ENCODE measurements at regions of chr6 and their contacts with region 1.

Region 1: DNA sequence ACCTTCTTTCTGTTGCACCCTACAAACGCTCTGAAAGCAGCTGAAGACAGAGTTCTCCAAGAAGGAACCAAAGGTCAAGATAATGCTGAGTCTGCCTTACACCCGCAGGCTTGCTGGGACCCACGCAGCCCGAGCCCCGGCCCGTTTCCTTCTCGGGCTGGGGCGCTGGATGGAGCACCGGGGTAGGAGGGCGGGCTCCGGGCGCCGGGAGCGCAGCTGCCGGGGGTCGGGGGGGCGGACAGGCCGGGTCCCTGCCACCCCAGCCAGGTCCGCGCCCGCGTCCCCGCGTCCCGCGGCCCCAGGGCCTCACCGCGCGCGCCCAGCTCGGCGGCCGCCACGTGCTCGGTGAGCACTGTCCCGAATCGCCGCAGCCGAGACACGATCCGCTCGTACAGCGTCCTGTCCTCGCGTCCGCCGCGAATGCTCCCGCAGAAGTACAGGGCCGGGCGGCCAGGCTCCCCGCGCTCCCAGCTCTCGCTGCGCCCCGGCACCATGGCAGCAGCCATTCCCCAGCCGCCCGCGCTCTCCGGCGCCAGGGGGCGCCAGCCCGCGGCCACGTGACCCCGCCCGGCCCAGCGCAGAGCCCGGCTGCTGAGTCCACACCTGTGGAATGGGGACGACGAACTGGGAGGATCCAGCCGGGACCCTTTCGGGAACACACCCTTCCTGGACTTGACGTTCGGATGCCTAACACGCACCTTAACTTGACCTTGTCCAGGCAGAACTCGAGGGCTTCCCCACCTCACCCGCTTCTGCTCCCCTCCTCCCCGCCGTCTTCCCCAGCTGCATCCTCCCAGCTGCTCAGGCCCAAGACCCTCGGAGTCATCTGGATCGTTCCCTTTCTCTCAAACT is at the start of gene DNPH1:
- DNase-seq: peak; percentile 60 to 91 (median 78)
- ATAC-seq: peak; percentile 67
- H3K4me3 ChIP-seq: peak within 1 kb of the TSS; percentile 68
- H3K4me3 Mint-ChIP-seq: peak within 1 kb of the TSS; percentile 93
- H3K27ac ChIP-seq: peak within 1 kb of the TSS in 1 of 2 donors; percentile 56
- H3K27ac Mint-ChIP-seq: peak within 1 kb of the TSS; percentile 88
- H3K4me1 ChIP-seq: peaks cover 47% of the 10 kb centered on the region
- H3K4me1 Mint-ChIP-seq: peaks cover 44% of the 10 kb centered on the region
- H3K27me3 ChIP-seq: no peaks in the 10 kb centered on the region
- H3K27me3 Mint-ChIP-seq: peaks cover 6% of the 10 kb centered on the region
- CTCF ChIP-seq: peak; percentile 90
- total RNA-seq, gene DNPH1: 27.3 to 30.6 TPM

Region 2: DNA sequence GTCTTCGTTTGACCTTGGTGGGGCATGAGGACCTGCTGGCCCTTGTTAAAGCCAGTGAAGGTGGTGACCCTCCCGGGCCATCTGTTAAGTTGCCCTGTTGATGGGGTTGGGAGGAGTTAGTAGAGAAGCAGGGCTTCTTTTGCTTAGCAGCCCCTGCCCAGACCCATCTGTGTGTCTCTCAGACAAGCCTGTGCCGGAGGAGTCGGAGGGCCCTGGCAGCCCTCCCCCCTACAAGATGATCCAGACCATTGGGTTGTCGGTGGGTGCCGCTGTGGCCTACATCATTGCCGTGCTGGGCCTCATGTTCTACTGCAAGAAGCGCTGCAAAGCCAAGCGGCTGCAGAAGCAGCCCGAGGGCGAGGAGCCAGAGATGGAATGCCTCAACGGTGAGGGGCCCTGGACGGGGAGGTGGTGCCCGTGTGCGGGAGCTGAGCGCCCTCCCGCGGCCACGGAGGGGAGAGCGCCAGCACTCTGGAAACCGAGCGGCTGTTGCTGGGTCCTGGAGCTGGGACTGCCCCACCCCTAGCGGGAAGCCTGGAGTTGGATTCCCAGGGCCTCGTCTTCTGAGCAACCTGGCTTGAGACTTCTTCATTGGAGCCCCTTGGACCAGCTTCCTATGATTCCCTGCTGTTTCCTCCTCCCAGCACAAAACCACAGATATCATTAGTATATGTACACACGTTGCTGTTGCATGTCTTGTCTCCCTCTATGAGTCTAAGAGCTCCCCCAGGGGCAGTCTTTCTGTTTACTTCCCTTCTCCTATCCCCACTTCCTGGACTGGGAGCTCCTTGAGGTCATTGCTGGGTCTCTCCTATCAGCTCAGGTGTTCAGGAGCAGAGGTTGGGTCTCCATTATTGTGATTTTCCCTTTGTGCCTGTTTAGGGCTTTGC is 85.7 kb before region 1 on chr6:
- CTCF ChIA-PET with region 1: no interaction called
- POLR2A ChIA-PET with region 1: no interaction called
- intact Hi-C with region 1: no loop called
- DNase-seq: peak; percentile 50 to 88 (median 70)
- ATAC-seq: peak; percentile 99
- H3K4me3 ChIP-seq: no peak overlapping the region
- H3K4me3 Mint-ChIP-seq: no peak overlapping the region
- H3K27ac ChIP-seq: no peak overlapping the region
- H3K27ac Mint-ChIP-seq: no peak overlapping the region
- H3K4me1 ChIP-seq: peaks cover 19% of the 10 kb centered on the region
- H3K4me1 Mint-ChIP-seq: peaks cover 10% of the 10 kb centered on the region
- H3K27me3 ChIP-seq: peaks cover 0 to 2% of the 10 kb centered on the region in 2 experiments
- H3K27me3 Mint-ChIP-seq: no peaks in the 10 kb centered on the region
- CTCF ChIP-seq: peak; percentile 88

Region 3: DNA sequence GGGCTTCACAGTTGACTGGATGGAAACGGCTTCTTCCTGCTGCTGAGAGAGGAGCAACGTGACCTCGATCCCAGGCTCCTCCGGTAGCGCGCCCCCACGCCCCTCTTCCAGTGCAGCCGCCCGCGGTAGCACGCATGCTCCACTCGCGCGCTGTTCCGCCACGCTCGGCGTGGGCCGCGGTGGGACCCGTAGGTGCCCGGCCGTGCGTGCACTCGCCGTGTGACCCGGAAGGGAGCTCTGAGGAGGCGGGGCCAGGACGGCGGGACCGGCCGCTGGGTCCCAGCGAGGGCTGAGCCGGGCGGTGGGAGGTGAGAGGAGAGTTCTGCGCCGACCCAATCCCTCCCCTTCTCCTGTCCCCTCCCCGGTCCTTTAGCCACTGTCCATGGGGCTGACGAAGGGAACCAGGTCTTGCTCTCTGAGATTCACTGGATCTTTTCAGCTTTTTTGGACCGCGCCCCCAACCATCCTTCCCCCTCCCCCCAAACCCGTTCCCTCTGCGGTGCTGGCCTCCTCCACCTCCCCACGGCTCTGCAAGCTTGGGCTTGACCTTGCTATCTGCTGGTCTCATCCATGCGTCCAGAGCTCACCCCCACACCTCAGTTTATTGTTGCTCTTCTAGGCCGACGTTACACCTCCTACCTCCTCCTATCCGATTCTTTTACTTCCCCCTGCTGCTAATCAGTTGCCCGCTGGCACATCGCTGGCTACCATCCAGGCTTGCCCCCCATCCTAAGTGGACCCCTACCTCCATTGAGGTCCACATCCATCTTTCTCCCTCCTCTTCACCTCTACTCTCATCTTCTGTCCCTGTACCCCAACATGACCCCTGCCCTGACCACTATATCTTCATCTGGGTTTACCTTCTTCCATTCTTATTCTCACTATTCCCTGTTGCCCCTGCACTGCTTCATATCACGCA is 47.0 kb before region 1 on chr6 and contains the start of gene CUL9:
- CTCF ChIA-PET with region 1: interaction called, 11 read pairs
- POLR2A ChIA-PET with region 1: interaction called, 7 read pairs
- intact Hi-C with region 1: loop called (anchors 1 to 5 kb)
- DNase-seq: peak; percentile 45 to 90 (median 74)
- ATAC-seq: peak; percentile 87
- H3K4me3 ChIP-seq: peak within 1 kb of the TSS; percentile 86
- H3K4me3 Mint-ChIP-seq: peak within 1 kb of the TSS; percentile 92
- H3K27ac ChIP-seq: peak within 1 kb of the TSS; percentile 64 to 68
- H3K27ac Mint-ChIP-seq: peak within 1 kb of the TSS; percentile 75
- H3K4me1 ChIP-seq: peaks cover 53% of the 10 kb centered on the region
- H3K4me1 Mint-ChIP-seq: peaks cover 56% of the 10 kb centered on the region
- H3K27me3 ChIP-seq: no peaks in the 10 kb centered on the region
- H3K27me3 Mint-ChIP-seq: no peaks in the 10 kb centered on the region
- CTCF ChIP-seq: no peak
- total RNA-seq, gene CUL9: 75.5 to 79.2 TPM

Region 4: GRCh38 chr6:43247113-43247999 is 18.2 kb after region 1 on chr6:
- CTCF ChIA-PET with region 1: interaction called, 18 read pairs
- POLR2A ChIA-PET with region 1: interaction called, 8 read pairs
- intact Hi-C with region 1: no loop called
- DNase-seq: peak; percentile 65 to 89 (median 76)
- ATAC-seq: peak; percentile 97
- H3K4me3 ChIP-seq: peak overlapping the region; percentile 58
- H3K4me3 Mint-ChIP-seq: no peak overlapping the region
- H3K27ac ChIP-seq: peak overlapping the region; percentile 24 to 42
- H3K27ac Mint-ChIP-seq: peak overlapping the region; percentile 70
- H3K4me1 ChIP-seq: peaks cover 26% of the 10 kb centered on the region
- H3K4me1 Mint-ChIP-seq: peaks cover 22% of the 10 kb centered on the region
- H3K27me3 ChIP-seq: peaks cover 34 to 35% of the 10 kb centered on the region in 2 experiments
- H3K27me3 Mint-ChIP-seq: peaks cover 15% of the 10 kb centered on the region
- CTCF ChIP-seq: no peak

Region 5: GRCh38 chr6:43386492-43386891 is 157.3 kb after region 1 on chr6:
- CTCF ChIA-PET with region 1: interaction called, 10 read pairs
- POLR2A ChIA-PET with region 1: interaction called, 5 read pairs
- intact Hi-C with region 1: no loop called
- DNase-seq: peak in 3 of 14 experiments; percentile 44 to 57 (median 50)
- ATAC-seq: no peak
- H3K4me3 ChIP-seq: no peak overlapping the region
- H3K4me3 Mint-ChIP-seq: peak overlapping the region; percentile 22
- H3K27ac ChIP-seq: no peak overlapping the region
- H3K27ac Mint-ChIP-seq: peak overlapping the region; percentile 93
- H3K4me1 ChIP-seq: peaks cover 55% of the 10 kb centered on the region
- H3K4me1 Mint-ChIP-seq: peaks cover 75% of the 10 kb centered on the region
- H3K27me3 ChIP-seq: no peaks in the 10 kb centered on the region
- H3K27me3 Mint-ChIP-seq: no peaks in the 10 kb centered on the region
- CTCF ChIP-seq: peak; percentile 54